Cardiac septum (tissue), 1 donor: ENCODE measurements at regions of chr14 and their contacts with region 1.

Region 1: GRCh38 chr14:20454516-20455354 is at the starts of genes APEX1 and OSGEP:
- DNase-seq: peak; percentile 99
- total RNA-seq, gene APEX1: 66.0 TPM
- total RNA-seq, gene OSGEP: 21.2 TPM

Region 2: GRCh38 chr14:20327005-20327869 is 127.5 kb before region 1 on chr14:
- intact Hi-C with region 1: loop called (anchors 5 kb)
- DNase-seq: no peak

Region 3: GRCh38 chr14:20413045-20413799 is 41.5 kb before region 1 on chr14 and contains the start of gene TEP1:
- intact Hi-C with region 1: loop called (anchors 2 kb)
- DNase-seq: peak; percentile 95
- total RNA-seq, gene TEP1: 15.7 TPM

Region 4: GRCh38 chr14:20427231-20428009 is 27.3 kb before region 1 on chr14:
- intact Hi-C with region 1: no loop called
- DNase-seq: no peak

Region 5: DNA sequence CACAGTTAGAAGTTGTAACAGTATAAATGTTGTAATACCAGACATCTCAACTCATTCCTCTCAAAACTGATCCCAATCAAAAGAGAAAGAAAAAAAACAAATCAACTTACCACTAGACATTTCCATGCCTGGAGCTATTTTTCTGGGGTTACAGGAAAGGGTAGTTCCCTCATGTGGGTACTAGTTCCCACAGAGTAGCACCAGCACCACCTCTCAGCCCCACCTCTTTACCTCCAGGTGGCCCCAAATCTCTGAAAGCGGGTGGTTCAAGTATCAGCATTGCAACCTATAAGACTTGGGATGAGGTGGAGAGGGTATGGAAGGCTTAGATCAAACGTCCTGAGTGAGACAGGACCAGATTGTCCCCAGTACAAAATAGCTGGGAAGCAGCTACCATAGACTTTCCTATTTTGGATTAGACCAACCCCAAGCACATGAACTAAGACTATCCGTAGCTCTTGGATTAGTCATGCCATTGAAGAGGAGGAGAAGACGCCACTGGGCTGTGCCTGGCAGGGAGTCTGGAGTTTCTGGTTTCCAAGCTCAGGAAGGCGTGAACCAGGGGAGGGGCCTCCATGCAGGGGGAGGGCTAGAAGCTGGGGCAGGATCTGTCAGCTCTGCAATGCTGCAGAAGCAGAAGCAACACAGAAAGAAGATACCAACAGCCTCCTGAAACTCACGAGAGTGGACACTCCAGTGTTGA is 544.1 kb after region 1 on chr14 and contains the start of gene SLC39A2:
- intact Hi-C with region 1: no loop called
- DNase-seq: no peak
- total RNA-seq, gene SLC39A2: not detected